Activated CD4-positive, alpha-beta T cell treated with anti-CD3 and anti-CD28 coated beads, Interleukin-2, amount 10 ng/mL, durations not matched to agents 24 days and 14 days (primary cell): ENCODE measurements at regions of chr11 and their contacts with region 1.

Region 1: DNA sequence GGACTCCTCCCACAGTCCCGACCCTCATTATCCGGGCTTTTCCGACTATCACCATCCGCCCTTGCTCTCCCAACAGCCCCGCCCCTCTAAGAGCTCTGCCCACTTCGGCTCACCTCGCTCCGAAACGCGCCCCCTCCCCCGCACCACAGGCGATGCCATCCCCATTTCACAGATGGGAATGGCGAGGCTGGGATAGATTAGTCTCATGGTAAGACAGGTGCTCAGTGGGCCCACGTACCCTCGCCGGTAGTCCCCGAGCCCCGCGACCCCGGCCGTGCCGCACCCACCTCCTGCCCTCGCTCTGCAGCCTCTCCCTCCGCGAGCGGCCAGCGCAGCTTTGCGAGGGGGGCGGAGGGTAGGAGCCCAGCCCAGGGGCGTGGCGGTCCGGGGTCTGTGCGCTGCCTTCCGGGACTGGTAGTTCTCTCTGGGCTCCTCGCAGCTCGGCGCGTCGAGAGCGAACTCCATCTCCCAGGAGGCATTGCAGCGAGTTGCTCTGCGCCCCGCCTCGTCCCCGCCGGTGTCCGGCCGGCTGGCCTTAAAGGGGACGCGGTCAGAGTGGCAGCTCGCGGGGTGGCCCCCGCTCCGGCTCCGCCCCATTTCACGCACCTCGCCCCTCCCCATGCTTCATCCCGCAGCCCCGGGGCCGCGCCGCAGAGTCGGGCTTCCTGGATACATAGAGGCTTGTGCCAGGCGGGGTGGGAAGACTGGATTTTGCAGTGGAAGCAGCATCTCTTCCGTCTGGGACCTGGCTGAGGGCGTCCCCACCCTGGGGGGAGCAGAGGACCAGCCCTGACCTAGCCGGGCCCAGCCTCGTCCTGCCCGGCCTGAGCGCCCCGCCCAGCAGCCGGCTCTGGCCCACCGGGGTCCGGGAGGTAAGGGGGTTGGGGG is at the starts of genes KCTD21 and USP35:
- DNase-seq: peak; percentile 98
- H3K4me3 Mint-ChIP-seq: peak within 1 kb of the TSS; percentile 99
- H3K27ac Mint-ChIP-seq: peak within 1 kb of the TSS; percentile 99
- H3K4me1 Mint-ChIP-seq: peaks cover 53% of the 10 kb centered on the region
- H3K27me3 Mint-ChIP-seq: no peaks in the 10 kb centered on the region
- total RNA-seq, gene KCTD21: 11.7 and 12.0 TPM in 2 replicates
- total RNA-seq, gene USP35: 10.4 and 13.1 TPM in 2 replicates

Region 2: DNA sequence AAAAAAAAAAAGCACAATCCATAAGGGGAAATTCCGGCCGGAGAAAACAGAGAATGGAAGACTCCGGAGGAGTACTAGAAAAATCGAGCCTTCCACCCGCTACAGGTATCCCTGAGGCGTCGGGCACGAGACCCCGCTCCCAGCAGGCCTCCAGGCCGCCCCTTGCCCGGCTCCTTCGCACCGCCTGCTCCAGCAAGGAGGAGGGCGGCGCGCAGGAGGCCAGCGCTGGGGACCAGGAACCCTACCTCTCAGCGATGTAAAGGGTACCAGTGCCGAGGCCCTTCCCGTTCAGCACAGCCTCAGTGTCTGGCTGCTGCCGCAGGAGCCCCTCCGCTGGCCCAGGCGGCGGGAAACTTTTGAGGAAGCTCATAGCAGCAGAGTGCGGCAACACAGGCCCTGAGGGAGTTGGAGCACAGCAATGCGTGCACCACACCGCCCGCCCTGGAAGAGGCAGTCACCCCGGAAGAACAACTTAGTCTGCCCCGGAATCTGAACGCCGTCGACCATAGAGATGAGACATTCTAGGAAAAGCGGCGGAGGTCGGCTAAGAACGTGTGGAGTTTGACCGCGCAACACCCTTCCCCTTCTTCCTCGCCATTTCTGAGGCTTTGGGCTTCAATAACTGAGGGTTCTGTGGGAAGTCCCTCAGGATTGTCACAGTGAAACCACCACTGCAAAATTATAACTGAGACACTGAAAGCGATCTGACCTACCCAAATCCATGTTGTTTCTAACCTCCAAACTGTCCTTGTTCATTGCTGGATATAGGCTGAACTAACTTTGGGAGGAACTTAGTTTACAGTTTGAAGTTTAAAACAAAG is 551.0 kb before region 1 on chr11 and contains the start of gene CLNS1A:
- intact Hi-C with region 1: loop called (anchors 5 kb)
- DNase-seq: peak; percentile 94
- H3K4me3 Mint-ChIP-seq: peak within 1 kb of the TSS; percentile 97
- H3K27ac Mint-ChIP-seq: peak within 1 kb of the TSS; percentile 95
- H3K4me1 Mint-ChIP-seq: peaks cover 30% of the 10 kb centered on the region
- H3K27me3 Mint-ChIP-seq: no peaks in the 10 kb centered on the region
- total RNA-seq, gene CLNS1A: 177 and 186 TPM in 2 replicates

Region 3: GRCh38 chr11:78079232-78080083 is 109.1 kb before region 1 on chr11 and contains the start of gene NDUFC2:
- intact Hi-C with region 1: loop called (anchors 1 kb)
- DNase-seq: peak; percentile 92
- H3K4me3 Mint-ChIP-seq: peak within 1 kb of the TSS; percentile 94
- H3K27ac Mint-ChIP-seq: peak within 1 kb of the TSS; percentile 91
- H3K4me1 Mint-ChIP-seq: peaks cover 51% of the 10 kb centered on the region
- H3K27me3 Mint-ChIP-seq: peaks cover 2% of the 10 kb centered on the region
- total RNA-seq, gene NDUFC2: 207 and 219 TPM in 2 replicates

Region 4: DNA sequence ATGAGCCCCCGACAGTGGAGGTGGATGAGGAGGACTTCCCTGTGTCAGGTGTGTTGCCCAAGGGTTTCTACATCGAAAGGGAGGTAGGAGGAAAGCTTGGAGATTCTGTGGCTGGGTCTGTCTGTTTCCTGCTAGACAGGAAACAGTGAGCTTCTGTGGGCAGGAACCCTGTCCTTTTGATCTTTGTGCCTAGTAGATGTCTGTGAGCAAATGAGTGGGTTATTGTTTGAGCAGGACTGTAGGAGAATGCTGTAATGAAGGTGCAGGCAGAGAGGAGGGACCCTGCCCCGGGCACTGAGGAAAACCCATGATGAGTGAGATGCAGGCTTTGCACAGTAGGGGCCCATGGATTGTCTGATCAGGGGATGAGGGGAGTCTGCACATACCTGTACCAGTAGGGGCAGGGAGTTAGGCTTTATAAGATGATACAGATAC is 14.2 kb after region 1 on chr11:
- intact Hi-C with region 1: loop called (anchors 2 kb)
- DNase-seq: peak; percentile 88
- H3K4me3 Mint-ChIP-seq: peak overlapping the region; percentile 81
- H3K27ac Mint-ChIP-seq: peak overlapping the region; percentile 95
- H3K4me1 Mint-ChIP-seq: peaks cover 43% of the 10 kb centered on the region
- H3K27me3 Mint-ChIP-seq: no peaks in the 10 kb centered on the region

Region 5: GRCh38 chr11:78325274-78325781 is 136.8 kb after region 1 on chr11:
- intact Hi-C with region 1: loop called (anchors 5 kb)
- DNase-seq: peak; percentile 83
- H3K4me3 Mint-ChIP-seq: peak overlapping the region; percentile 53
- H3K27ac Mint-ChIP-seq: peak overlapping the region; percentile 87
- H3K4me1 Mint-ChIP-seq: peaks cover 74% of the 10 kb centered on the region
- H3K27me3 Mint-ChIP-seq: no peaks in the 10 kb centered on the region

Region 6: DNA sequence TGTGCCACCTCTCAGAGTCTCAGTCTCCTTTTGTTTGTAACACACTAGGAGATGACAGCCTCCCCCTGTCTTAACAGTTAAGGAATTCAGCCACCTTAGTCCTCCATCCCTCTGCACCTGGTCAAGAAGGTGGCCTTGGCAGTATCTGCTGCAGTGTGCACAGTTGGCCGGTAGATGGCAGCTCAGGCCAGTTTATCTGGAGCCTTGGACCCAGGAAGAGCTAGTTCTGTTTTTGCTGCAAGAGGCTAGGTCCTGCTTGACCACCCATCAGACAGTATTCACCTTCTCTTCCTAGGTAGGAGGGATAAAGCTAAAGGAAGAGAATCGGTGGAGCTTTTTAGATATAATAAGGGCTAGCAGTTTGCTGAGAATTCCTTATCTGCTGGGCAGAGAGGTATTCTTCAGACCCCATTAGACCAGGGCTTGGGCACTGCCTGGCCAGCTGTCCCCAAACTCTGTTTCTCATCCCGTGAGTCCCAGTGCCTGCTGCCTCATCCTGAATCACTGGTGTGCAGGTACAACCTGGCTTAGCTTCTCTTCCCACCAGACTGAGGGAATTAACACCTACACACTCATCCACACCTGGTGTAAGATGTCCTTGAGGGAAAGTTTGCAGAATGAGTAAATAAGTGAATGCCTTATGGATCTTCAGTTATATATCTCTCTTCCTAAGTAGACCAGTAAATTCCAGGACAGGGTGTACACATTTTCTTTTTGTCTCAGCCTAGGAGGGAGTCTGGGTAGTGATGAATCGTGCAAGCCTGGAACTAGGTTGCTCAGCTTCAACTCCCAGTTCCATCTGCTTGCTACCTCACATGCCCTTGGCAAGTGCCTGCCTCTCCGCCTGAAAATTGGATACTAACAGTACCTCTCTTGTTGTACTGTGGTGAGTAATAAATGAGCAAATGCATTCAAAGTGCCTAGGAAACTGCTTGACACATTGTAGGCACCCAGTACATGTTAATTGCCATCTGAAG is 457.0 kb after region 1 on chr11:
- intact Hi-C with region 1: loop called (anchors 2 kb)
- DNase-seq: peak; percentile 90
- H3K4me3 Mint-ChIP-seq: peak overlapping the region; percentile 21
- H3K27ac Mint-ChIP-seq: peak overlapping the region; percentile 21
- H3K4me1 Mint-ChIP-seq: peaks cover 38% of the 10 kb centered on the region
- H3K27me3 Mint-ChIP-seq: no peaks in the 10 kb centered on the region